ENCODE measurements at regions of chr6 and their contacts with region 1.

Region 1: DNA sequence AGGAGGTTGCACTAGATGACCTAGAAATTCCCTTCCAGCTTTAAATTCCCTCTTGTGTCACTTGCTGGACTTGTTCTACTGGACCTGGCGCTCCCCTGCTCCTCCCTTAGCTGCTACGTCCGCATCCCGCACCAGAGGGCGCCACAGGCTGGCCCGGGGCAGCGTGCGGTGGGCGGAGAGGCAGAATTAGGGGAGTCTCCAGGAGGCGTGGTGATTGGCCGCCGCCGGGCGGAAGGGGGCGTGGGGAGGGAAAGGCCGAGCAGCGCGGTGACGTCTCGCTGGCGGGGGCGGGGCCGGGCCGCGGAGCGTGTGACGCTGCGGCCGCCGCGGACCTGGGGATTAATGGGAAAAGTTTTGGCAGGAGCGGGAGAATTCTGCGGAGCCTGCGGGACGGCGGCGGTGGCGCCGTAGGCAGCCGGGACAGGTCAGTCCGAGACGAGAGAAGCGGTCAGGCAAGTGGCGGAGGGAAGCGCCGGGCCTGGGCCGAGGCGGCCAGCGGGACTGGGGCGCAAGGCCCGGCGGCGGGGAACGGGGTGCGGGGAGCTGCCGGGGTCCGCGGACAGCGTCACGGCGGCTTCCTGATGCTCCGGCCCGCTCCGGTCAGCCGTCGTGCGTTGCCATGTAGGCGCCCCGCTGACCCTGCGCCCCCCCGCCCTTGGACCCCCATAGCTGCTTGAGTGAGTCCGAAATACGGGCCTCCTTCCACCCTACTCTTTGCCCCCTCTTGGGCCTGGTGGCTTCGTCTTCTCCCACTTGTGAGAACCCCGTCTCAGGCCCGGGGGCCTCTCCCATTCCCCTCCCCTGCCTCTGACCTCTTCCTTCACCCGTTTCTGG is at the start of gene PPARD:
- DNase-seq: peak; percentile 84 to 91
- ATAC-seq: peak; percentile 97 to 99
- H3K4me3 ChIP-seq: peak within 1 kb of the TSS; percentile 69
- H3K27ac ChIP-seq: peak within 1 kb of the TSS; percentile 72 to 89
- H3K4me1 ChIP-seq: peaks cover 8% of the 10 kb centered on the region; the same call in 2 of the 3 replicates
- CTCF ChIP-seq: peak; percentile 86
- EP300 ChIP-seq: no peak
- POLR2A ChIP-seq: 0 out of 2 replicates have a peak, but pooled peaks have one; percentile 33
- RAD21 ChIP-seq: peak; percentile 95 to 96
- polyA plus RNA-seq, gene PPARD: 3.8 and 4.1 TPM in 2 replicates

Region 2: DNA sequence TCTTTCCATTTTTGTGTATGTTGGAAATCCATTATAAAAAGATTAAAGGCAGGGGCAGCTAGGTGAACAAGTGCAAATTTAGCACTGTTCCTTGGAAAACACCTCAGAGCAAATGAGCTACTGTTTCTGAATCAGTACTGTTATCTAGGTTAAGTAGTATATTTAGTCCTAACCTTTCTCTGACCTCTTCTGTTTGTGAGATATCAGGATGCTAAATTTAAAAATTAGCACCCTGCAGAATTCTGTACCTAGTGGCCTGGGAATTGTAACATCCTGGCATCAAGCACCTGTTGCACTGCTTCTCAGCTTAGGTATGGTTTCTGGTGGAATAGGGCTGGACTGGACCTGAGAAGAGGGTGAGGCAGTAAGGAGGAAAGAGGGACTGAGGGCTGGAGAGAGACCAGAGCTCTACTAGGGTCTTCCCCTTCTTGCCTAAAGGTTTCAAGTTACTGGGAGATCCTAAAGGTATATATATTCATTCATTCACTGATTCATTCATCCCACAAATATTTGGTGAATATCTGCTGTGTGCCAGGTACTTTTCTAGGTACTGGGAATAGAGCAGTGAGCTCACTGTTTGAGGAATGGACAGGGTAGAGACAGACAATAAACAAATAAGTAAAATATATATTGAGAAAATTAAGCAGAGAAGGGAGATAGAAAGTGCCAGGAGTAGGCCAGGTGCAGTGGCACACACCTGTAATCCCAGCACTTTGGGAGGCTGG is 77.8 kb before region 1 on chr6:
- CTCF ChIA-PET with region 1: no interaction called
- POLR2A ChIA-PET with region 1: no interaction called
- DNase-seq: no peak
- ATAC-seq: no peak
- H3K4me3 ChIP-seq: no peak overlapping the region
- H3K27ac ChIP-seq: no peak overlapping the region
- H3K4me1 ChIP-seq: peaks cover 12% of the 10 kb centered on the region
- CTCF ChIP-seq: no peak
- EP300 ChIP-seq: no peak
- POLR2A ChIP-seq: no peak
- RAD21 ChIP-seq: no peak

Region 3: GRCh38 chr6:35327349-35328027 is 15.0 kb before region 1 on chr6:
- CTCF ChIA-PET with region 1: interaction called, 30 read pairs
- POLR2A ChIA-PET with region 1: no interaction called
- DNase-seq: peak; percentile 55 to 63
- ATAC-seq: peak; percentile 97 to 99
- H3K4me3 ChIP-seq: no peak overlapping the region
- H3K27ac ChIP-seq: no peak overlapping the region
- H3K4me1 ChIP-seq: no peaks in the 10 kb centered on the region
- CTCF ChIP-seq: peak; percentile 28; the same call in 2 of the 3 replicates
- EP300 ChIP-seq: no peak
- POLR2A ChIP-seq: no peak
- RAD21 ChIP-seq: peak; percentile 29 to 41; a peak in 3 of 5 replicates

Region 4: DNA sequence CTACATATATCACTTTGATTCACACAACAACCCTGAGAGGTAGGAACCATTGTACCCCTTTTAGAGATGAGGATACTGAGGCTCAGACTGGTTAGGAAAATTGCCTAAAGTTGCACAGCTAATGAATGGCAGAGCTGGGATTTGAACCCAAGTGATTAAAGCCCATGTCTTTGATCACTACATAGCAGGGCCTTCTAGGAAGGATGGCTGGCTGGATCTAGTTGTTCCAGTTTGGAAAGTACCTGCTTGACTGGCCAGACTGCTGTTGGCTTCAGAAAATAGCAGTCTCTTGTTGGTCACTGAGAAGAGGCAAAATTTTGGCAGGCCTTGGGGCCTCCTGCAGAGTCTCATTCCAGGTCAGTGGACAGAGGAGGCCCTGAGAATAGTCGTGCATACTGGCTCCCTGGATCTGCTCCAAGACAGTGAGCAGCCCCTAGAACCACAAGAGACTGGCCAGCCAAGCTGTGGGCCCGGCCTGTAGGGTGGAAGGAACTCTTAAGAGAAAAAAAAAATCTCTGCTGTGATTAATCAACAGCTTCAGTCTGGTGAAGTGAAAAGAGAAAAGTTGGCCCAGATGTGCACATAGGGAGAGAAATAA is 17.4 kb after region 1 on chr6:
- CTCF ChIA-PET with region 1: interaction called, 14 read pairs
- POLR2A ChIA-PET with region 1: no interaction called
- DNase-seq: no peak
- ATAC-seq: no peak; a peak in 1 of 6 replicates
- H3K4me3 ChIP-seq: no peak overlapping the region
- H3K27ac ChIP-seq: peak overlapping the region in 1 of 2 experiments; percentile 41; a peak in 2 of 6 replicates
- H3K4me1 ChIP-seq: 0 out of 3 replicates have a peak, but pooled peaks cover 3% of the 10 kb centered on the region
- CTCF ChIP-seq: no peak
- EP300 ChIP-seq: no peak
- POLR2A ChIP-seq: no peak
- RAD21 ChIP-seq: no peak

Region 5: GRCh38 chr6:35415065-35415991 is 72.9 kb after region 1 on chr6:
- CTCF ChIA-PET with region 1: interaction called, 17 read pairs
- POLR2A ChIA-PET with region 1: no interaction called
- DNase-seq: peak; percentile 66 to 83
- ATAC-seq: peak; percentile 92 to 97
- H3K4me3 ChIP-seq: no peak overlapping the region
- H3K27ac ChIP-seq: peak overlapping the region in 1 of 2 experiments; percentile 27; a peak in 2 of 6 replicates
- H3K4me1 ChIP-seq: peaks cover 14% of the 10 kb centered on the region
- CTCF ChIP-seq: peak; percentile 58
- EP300 ChIP-seq: no peak
- POLR2A ChIP-seq: no peak
- RAD21 ChIP-seq: peak; percentile 45 to 53; a peak in 3 of 5 replicates

Region 6: DNA sequence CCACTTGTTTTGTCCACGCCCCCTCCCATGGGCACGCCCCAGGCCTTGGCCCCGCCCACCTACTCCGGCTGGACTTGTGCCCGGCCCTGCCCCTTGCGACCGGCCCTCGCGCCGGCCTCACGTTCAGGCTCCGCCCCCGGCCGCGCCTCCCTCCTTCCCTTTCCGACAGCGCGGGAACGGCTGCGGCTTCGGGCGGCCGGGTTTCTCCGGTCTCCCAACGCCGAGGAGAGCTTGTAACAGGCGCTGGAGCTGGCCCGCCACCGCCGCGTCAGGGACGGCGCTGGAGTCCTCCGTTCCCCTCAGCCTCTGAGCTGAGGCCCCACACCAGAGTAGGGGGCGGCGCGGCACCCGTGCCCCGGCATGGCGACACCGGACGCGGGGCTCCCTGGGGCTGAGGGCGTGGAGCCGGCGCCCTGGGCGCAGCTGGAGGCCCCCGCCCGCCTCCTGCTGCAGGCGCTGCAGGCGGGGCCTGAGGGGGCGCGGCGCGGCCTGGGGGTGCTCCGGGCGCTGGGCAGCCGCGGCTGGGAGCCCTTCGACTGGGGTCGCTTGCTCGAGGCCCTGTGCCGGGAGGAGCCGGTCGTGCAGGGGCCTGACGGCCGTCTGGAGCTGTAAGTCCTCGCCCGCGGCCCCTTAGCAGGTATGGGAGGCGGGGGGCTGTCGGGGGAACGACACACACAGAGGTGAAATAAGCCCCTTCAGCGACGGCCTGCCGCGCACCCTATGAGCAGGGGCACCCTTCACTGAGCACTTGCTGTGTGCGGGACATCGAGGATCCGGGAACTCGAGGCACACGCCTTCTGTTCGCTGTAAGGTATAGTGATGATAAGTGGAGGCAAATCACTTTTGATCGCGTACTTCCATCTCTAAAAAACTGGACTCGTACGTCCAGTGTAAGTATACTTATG is 110.0 kb after region 1 on chr6 and contains the start of gene FANCE:
- CTCF ChIA-PET with region 1: interaction called, 140 read pairs
- POLR2A ChIA-PET with region 1: interaction called, 8 read pairs
- DNase-seq: peak; percentile 70 to 89
- ATAC-seq: peak; percentile 75 to 89
- H3K4me3 ChIP-seq: peak within 1 kb of the TSS; percentile 91
- H3K27ac ChIP-seq: peak within 1 kb of the TSS; percentile 74 to 88
- H3K4me1 ChIP-seq: peaks cover 5% of the 10 kb centered on the region; the same call in 2 of the 3 replicates
- CTCF ChIP-seq: no peak
- EP300 ChIP-seq: no peak
- POLR2A ChIP-seq: peak; percentile 14; the same call in 1 of the 2 replicates
- RAD21 ChIP-seq: no peak
- polyA plus RNA-seq, gene FANCE: 3.5 and 3.7 TPM in 2 replicates

Region 7: GRCh38 chr6:35468181-35468979 is 125.9 kb after region 1 on chr6 and contains the start of gene RPL10A:
- CTCF ChIA-PET with region 1: interaction called, 22 read pairs
- POLR2A ChIA-PET with region 1: interaction called, 4 read pairs
- DNase-seq: peak; percentile 73 to 95
- ATAC-seq: peak; percentile 86 to 90
- H3K4me3 ChIP-seq: peak within 1 kb of the TSS; percentile 99
- H3K27ac ChIP-seq: peak within 1 kb of the TSS; percentile 97 to 98
- H3K4me1 ChIP-seq: peaks cover 33% of the 10 kb centered on the region
- CTCF ChIP-seq: peak; percentile 81
- EP300 ChIP-seq: no peak
- POLR2A ChIP-seq: peak; percentile 99
- RAD21 ChIP-seq: peak; percentile 56 to 72
- polyA plus RNA-seq, gene RPL10A: 1,645 and 1,707 TPM in 2 replicates